Activated T-helper 1 cell treated with anti-CD3 and anti-CD28 coated beads, Interleukin-12 subunit alpha, Interleukin-12 subunit beta, Interleukin-2, Interleukin-4 antibody, amounts not matched to agents 30 ng/mL and 10 ng/mL and 1 ng/mL, durations not matched to agents 14 hours and 24 hours and 36 hours (primary cell): ENCODE measurements at regions of chr19 and their contacts with region 1.

Region 1: DNA sequence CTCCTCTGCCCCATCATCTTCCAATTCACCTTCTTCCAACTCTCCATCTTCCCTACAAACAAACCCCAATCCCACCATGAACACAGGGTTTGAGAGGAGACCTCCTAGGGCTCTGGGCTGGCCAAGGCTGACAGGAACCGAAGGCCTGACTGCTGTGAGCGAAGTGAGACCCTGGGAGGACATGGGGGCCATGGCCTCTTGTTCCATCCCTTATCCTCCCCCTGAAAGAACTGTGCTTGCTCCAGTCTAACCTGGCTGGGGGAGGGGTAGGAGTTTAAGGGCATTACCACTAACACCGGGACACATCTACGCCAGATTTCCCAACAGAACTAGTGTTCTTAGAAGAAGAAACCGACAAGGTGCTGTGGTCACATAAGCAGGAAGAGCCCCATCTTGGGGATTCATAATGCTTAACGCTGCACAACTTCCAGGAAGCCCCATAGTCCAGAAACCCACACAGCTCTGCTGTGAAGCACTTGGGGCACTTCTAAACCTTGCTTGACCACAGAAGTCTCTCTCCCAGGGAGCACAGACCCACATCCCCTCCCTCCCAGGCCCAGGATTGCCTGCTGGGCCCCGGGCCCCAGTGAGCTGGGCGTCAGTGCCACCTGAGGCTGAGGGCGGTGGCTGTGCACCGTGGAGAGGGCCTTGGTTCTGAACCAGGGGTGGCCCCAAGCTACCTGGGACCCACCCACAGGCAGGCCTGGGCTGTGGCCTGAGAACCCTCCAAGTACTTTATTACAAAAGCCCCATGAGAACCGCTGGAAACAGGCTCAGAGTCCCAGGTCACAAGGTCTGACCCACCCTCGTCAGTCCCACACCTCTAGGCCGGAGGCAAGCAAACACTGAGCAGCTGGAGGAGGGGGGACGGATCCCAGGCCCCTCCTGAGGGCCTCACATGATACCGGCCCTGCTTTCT is 18.8 kb downstream of the ZC3H4 start:
- DNase-seq: peak; percentile 60
- H3K4me3 Mint-ChIP-seq: peak overlapping the region; percentile 93
- H3K27ac Mint-ChIP-seq: peak overlapping the region; percentile 99
- H3K4me1 Mint-ChIP-seq: peaks cover 72% of the 10 kb centered on the region
- H3K27me3 Mint-ChIP-seq: no peaks in the 10 kb centered on the region

Region 2: GRCh38 chr19:46954993-46955812 is 139.6 kb before region 1 on chr19:
- intact Hi-C with region 1: loop called (anchors 2 kb)
- DNase-seq: peak; percentile 43
- H3K4me3 Mint-ChIP-seq: peak overlapping the region; percentile 88
- H3K27ac Mint-ChIP-seq: peak overlapping the region; percentile 93
- H3K4me1 Mint-ChIP-seq: peaks cover 79% of the 10 kb centered on the region
- H3K27me3 Mint-ChIP-seq: no peaks in the 10 kb centered on the region

Region 3: GRCh38 chr19:46967578-46968027 is 127.2 kb before region 1 on chr19:
- intact Hi-C with region 1: no loop called
- DNase-seq: peak; percentile 24
- H3K4me3 Mint-ChIP-seq: peak overlapping the region; percentile 58
- H3K27ac Mint-ChIP-seq: peak overlapping the region; percentile 77
- H3K4me1 Mint-ChIP-seq: peaks cover 49% of the 10 kb centered on the region
- H3K27me3 Mint-ChIP-seq: no peaks in the 10 kb centered on the region

Region 4: GRCh38 chr19:47075179-47075810 is 19.5 kb before region 1 on chr19:
- intact Hi-C with region 1: loop called (anchors 2 kb)
- DNase-seq: no peak
- H3K4me3 Mint-ChIP-seq: no peak overlapping the region
- H3K27ac Mint-ChIP-seq: peak overlapping the region; percentile 5
- H3K4me1 Mint-ChIP-seq: peaks cover 16% of the 10 kb centered on the region
- H3K27me3 Mint-ChIP-seq: no peaks in the 10 kb centered on the region

Region 5: DNA sequence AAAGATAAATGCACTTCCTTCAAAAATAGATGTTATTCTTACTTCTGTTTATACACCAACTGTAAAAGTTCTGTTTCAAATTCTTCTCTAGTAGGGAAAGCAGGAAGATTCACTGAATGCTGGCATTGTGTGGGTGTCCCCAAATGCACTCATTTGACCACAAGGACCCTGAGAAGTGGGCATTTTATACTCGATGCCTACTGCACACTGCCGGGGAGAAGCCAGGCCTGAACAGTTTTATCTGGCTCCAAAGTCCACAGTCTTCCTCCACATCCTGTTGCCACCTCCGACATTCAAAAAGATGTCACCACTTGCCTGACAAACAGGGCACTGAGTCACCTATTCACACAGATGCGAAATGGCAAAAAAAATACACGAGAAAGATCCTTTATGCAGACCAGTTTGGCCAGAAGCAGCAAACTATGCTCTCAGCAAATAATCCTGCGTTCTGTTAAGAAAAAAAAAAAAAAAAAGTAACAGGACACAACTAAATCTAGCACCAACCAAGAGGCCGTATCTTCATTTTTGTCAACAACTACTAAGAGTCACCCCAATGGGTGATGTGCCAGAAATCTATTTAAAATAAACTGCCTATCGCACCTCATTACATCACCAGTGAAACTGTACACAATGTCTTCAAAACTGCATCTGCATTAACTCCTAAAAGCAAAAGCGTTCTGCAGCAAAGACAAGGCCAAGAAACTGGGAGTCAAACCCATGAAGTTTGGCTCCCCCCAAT is 12.6 kb after region 1 on chr19:
- intact Hi-C with region 1: loop called (anchors 1 kb)
- DNase-seq: peak; percentile 52
- H3K4me3 Mint-ChIP-seq: peak overlapping the region; percentile 92
- H3K27ac Mint-ChIP-seq: peak overlapping the region; percentile 99
- H3K4me1 Mint-ChIP-seq: peaks cover 65% of the 10 kb centered on the region
- H3K27me3 Mint-ChIP-seq: no peaks in the 10 kb centered on the region

Region 6: GRCh38 chr19:47112997-47113849 is 18.4 kb after region 1 on chr19 and contains the start of gene ZC3H4:
- intact Hi-C with region 1: loop called (anchors 1 kb)
- DNase-seq: peak; percentile 100
- H3K4me3 Mint-ChIP-seq: peak within 1 kb of the TSS; percentile 92
- H3K27ac Mint-ChIP-seq: peak within 1 kb of the TSS; percentile 99
- H3K4me1 Mint-ChIP-seq: peaks cover 33% of the 10 kb centered on the region
- H3K27me3 Mint-ChIP-seq: no peaks in the 10 kb centered on the region
- total RNA-seq, gene ZC3H4: 111 and 114 TPM in 2 replicates